Cardiac septum (tissue), 1 donor: ENCODE measurements at regions of chr7 and their contacts with region 1.

Region 1: DNA sequence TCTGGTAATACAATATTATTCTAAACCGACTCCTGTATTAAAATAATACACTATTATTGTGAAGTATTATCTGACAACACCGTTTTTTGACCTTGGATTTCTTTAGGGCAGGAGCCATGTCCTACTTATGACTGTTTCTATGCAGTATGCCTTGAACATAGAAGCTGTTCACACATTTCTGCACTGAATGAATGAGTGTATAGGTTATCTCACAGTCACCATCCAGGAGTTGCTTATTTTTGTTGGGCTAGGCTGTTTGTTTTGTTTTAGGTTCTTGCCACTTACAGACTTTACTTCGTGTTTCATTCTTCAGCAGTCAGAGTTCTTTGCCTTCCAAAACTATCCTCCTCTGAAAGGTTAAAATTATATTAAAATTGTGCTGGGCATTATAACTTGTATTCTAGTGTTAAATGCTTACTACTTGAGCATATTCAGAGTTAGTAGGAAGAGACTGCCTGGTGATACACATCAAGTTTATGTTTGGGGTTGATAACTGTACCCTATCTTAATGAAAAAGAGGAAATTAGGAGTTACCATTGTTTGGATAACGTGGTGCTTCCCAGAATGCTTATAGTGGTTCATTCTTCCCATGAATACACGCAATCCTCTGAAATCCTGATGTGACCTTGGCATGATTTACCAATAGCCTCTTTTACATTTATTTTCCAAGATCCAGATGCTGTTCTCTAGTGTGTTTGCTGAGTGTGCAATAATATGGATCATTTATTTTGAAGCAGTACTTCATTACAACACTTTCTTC is 1.7 kb downstream of the RALA start:
- DNase-seq: no peak

Region 2: DNA sequence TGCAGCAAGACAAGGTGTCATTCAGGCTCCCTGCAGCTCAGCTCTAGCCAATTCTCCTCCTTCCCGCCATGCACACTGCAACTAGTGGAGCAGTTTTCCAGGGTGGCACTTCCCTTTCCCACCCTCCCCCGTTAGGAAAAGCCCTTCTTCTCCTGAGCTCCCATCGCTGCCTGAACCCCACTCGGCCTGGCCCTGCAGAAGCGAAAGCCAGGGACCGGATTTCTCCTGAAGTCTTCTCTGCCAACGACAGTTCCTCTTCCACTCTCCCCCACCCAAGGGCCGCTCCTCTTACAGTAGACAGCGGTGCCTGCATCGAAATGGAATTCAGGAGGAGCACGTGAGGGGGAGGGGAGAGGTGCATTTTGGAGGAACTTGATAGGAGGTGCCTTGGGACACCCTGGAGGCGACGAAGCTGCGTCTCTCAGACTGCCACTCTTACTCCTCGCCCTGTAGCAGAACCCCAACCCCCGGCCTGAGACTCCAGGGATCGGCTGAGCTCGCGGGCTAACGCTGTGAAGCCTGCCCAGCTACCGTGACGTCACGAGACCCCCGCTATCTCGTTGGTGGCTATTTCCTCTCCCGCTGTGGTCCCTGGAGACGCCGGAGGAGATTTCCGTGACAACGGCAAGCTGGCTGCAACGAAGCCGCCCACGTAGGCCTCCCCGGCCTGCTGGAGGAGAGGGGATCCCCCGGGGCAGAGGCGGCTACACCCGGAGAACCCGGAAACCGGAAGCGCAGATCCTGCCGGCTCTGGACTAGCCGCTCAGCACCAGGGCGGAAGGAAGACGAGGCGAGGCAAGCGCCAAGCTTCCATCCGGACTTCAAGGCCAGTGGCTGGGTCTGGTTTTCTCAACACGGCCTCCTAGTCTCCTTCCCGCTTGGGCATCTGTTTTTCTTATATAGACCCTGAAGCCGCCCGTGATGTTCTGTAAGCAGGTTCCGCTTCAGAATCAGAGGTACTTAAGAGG is 108.0 kb after region 1 on chr7:
- intact Hi-C with region 1: loop called (anchors 5 kb)
- DNase-seq: peak; percentile 97